Ascending aorta (tissue), 2 donors: ENCODE measurements at regions of chr20 and their contacts with region 1.

Region 1: GRCh38 chr20:32779500-32780211 is 17.5 kb downstream of the DNMT3B start:
- DNase-seq: no peak
- H3K4me3 ChIP-seq: no peak overlapping the region
- H3K27ac ChIP-seq: no peak overlapping the region
- H3K4me1 ChIP-seq: no peaks in the 10 kb centered on the region
- H3K27me3 ChIP-seq: no peaks in the 10 kb centered on the region
- CTCF ChIP-seq: no peak

Region 2: GRCh38 chr20:32521780-32522525 is 257.7 kb before region 1 on chr20:
- intact Hi-C with region 1: loop called (anchors 5 kb)
- DNase-seq: no peak
- H3K4me3 ChIP-seq: no peak overlapping the region
- H3K27ac ChIP-seq: no peak overlapping the region
- H3K4me1 ChIP-seq: no peaks in the 10 kb centered on the region
- H3K27me3 ChIP-seq: no peaks in the 10 kb centered on the region
- CTCF ChIP-seq: peak; percentile 67 to 81 (median 81)

Region 3: GRCh38 chr20:32678948-32679347 is 100.7 kb before region 1 on chr20:
- intact Hi-C with region 1: loop called (anchors 5 kb)
- DNase-seq: no peak
- H3K4me3 ChIP-seq: no peak overlapping the region
- H3K27ac ChIP-seq: no peak overlapping the region
- H3K4me1 ChIP-seq: no peaks in the 10 kb centered on the region
- H3K27me3 ChIP-seq: no peaks in the 10 kb centered on the region
- CTCF ChIP-seq: no peak

Region 4: GRCh38 chr20:32752458-32753250 is 27.0 kb before region 1 on chr20:
- intact Hi-C with region 1: no loop called
- DNase-seq: no peak
- H3K4me3 ChIP-seq: no peak overlapping the region
- H3K27ac ChIP-seq: no peak overlapping the region
- H3K4me1 ChIP-seq: no peaks in the 10 kb centered on the region
- H3K27me3 ChIP-seq: no peaks in the 10 kb centered on the region
- CTCF ChIP-seq: no peak

Region 5: GRCh38 chr20:33178726-33179125 is 399.1 kb after region 1 on chr20:
- intact Hi-C with region 1: no loop called
- DNase-seq: no peak
- H3K4me3 ChIP-seq: no peak overlapping the region
- H3K27ac ChIP-seq: no peak overlapping the region
- H3K4me1 ChIP-seq: no peaks in the 10 kb centered on the region
- H3K27me3 ChIP-seq: no peaks in the 10 kb centered on the region
- CTCF ChIP-seq: no peak